ENCODE measurements at regions of chr3 and their contacts with region 1.

Region 1: GRCh38 chr3:48400824-48401433 is 28.9 kb downstream of the FBXW12 start:
- DNase-seq: peak; percentile 46 to 57 (median 49)
- ATAC-seq: peak; percentile 43 to 77 (median 60)
- H3K4me3 ChIP-seq: no peak overlapping the region
- H3K27ac ChIP-seq: peak overlapping the region in 1 of 12 donors; percentile 86
- H3K4me1 ChIP-seq: peaks cover 0 to 11% (median 2%) of the 10 kb centered on the region in 12 donors
- H3K27me3 ChIP-seq: no peaks in the 10 kb centered on the region
- CTCF ChIP-seq: peak; percentile 72 to 89 (median 79)
- POLR2A ChIP-seq: no peak

Region 2: DNA sequence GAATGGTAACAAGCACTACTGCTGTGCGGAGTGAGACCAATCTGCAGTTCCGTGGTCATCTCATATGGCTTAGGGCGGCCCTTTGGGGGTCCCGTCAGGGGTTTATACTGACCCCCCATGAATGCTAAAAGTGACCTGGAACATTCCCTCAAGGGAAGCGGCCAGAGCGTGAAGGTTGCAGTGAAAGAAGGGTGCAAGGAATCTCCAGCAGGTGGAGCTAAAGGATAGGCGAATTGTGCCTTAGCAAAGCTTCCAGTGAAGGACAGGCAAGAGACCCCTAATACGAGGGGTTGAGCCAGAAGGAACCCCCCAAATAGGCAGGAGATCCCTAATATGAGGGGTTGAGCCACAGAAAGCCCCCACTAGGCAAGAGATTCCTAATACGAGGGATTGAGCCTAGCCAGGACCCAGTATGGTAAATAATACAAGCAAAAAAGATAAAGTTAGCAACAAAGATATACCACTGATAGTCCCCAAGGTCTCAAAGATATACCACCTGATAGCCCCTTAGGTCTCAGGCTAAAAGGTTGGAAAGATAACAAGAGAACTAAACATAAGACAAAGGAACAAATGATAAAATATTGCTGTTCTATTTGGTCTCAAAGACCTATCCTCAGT is 127.2 kb before region 1 on chr3:
- intact Hi-C with region 1: loop called in 2 of 10 experiments (anchors 2 to 10 kb)
- DNase-seq: peak in 3 of 5 donors; percentile 30 to 47 (median 46)
- ATAC-seq: peak in 3 of 4 donors; percentile 65 to 69 (median 69)
- H3K4me3 ChIP-seq: no peak overlapping the region
- H3K27ac ChIP-seq: no peak overlapping the region
- H3K4me1 ChIP-seq: peaks cover 0 to 4% (median 0%) of the 10 kb centered on the region in 12 donors
- H3K27me3 ChIP-seq: no peaks in the 10 kb centered on the region
- CTCF ChIP-seq: peak; percentile 60 to 84 (median 74)
- POLR2A ChIP-seq: no peak

Region 3: GRCh38 chr3:48369693-48370332 is 31.1 kb before region 1 on chr3:
- intact Hi-C with region 1: no loop called
- DNase-seq: no peak
- ATAC-seq: no peak
- H3K4me3 ChIP-seq: no peak overlapping the region
- H3K27ac ChIP-seq: no peak overlapping the region
- H3K4me1 ChIP-seq: no peaks in the 10 kb centered on the region
- H3K27me3 ChIP-seq: no peaks in the 10 kb centered on the region
- CTCF ChIP-seq: no peak
- POLR2A ChIP-seq: no peak

Region 4: GRCh38 chr3:48432411-48433372 is 31.8 kb after region 1 on chr3:
- intact Hi-C with region 1: loop called (anchors 1 to 2 kb)
- DNase-seq: no peak
- ATAC-seq: no peak
- H3K4me3 ChIP-seq: no peak overlapping the region
- H3K27ac ChIP-seq: no peak overlapping the region
- H3K4me1 ChIP-seq: peaks cover 0 to 38% (median 19%) of the 10 kb centered on the region in 12 donors
- H3K27me3 ChIP-seq: no peaks in the 10 kb centered on the region
- CTCF ChIP-seq: peak in 1 of 12 donors; percentile 15
- POLR2A ChIP-seq: no peak

Region 5: DNA sequence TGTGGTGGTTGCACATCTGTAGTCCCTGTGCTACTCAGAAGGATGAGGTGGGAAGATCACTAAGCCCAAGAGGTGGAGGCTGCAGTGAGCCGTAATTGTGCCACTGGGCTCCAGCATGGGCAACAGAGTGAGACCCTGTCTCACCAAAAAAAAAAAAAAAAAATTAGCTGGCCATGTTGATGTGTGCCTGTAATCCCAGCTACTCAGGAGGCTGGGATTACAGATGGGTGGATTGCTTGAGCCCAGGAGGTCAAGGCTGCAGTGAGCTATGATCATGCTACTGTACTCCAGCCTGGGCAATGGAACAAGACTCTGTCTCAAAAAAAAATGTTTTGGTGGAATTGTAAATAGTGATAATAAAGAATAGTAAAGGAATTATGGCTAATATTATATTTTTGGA is 55.5 kb after region 1 on chr3:
- intact Hi-C with region 1: no loop called
- DNase-seq: no peak
- ATAC-seq: no peak
- H3K4me3 ChIP-seq: no peak overlapping the region
- H3K27ac ChIP-seq: no peak overlapping the region
- H3K4me1 ChIP-seq: no peaks in the 10 kb centered on the region
- H3K27me3 ChIP-seq: no peaks in the 10 kb centered on the region
- CTCF ChIP-seq: no peak
- POLR2A ChIP-seq: no peak